Transverse colon (tissue), 4 donors: ENCODE measurements at regions of chr5 and their contacts with region 1.

Region 1: DNA sequence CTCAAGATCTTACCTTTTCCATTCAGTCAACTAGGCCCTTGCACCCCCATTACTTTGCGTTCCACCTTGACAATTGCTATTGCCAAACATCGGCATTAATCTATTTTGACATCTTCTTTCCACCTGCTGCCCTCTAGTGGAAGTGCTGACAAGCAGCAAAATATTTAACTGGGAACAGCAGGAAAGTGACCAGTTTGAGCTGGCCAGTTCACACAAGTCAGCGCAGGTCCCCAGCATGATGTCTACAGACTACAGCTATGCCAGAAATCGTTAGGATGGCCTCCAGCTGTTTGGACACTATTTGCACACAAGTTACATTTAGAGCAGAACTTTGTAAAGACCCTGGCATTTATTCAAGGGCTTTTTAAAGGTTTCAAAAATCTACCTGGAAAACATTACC is 160.1 kb downstream of the GHR start:
- DNase-seq: peak; percentile 47
- H3K4me3 ChIP-seq: no peak overlapping the region
- H3K27ac ChIP-seq: no peak overlapping the region
- H3K4me1 ChIP-seq: peaks cover 0 to 22% (median 2%) of the 10 kb centered on the region in 4 donors
- H3K27me3 ChIP-seq: no peaks in the 10 kb centered on the region
- CTCF ChIP-seq: peak; percentile 80 to 83 (median 81)
- EP300 ChIP-seq: no peak
- POLR2A ChIP-seq: no peak

Region 2: DNA sequence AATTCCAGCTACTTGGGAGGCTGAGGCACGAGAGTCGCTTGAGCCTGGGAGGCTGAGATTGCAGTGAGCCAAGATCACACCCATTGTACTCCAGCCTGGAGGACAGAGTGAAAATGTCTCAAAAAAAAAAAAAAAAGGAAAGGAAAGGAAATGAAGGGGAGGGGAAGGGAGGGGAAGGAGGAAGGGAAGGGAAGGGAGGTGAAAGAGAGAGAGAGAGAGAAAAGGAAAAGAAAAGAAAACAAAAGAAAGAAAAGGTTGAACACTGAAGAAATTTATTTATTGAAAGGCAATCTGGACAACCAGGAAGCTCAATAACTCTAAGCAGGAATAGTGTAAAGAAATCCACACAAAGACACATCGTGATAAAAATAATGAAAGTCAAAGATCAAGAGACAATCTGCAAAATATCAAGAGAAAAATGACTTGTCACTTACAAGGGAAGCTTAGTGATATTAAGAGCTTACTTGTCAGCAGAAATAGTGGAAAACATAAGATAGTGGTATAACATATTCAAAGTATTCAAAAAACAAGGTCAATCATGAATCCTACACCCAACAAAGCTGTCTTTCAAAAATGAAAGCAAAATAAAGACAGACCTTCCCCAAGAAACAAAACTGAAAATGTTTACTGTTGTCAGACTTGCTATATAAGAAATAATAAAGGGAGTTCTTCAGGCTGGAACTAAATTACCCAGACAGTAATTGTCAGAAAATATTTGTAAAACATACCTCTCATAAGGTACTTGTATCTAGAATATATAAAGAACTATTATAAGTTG is 690.1 kb before region 1 on chr5:
- in situ Hi-C with region 1: loop called in 1 of 4 experiments (anchors 25 kb)
- intact Hi-C with region 1: no loop called
- DNase-seq: no peak
- H3K4me3 ChIP-seq: no peak overlapping the region
- H3K27ac ChIP-seq: no peak overlapping the region
- H3K4me1 ChIP-seq: no peaks in the 10 kb centered on the region
- H3K27me3 ChIP-seq: peaks cover 21% of the 10 kb centered on the region
- CTCF ChIP-seq: no peak
- EP300 ChIP-seq: no peak
- POLR2A ChIP-seq: no peak

Region 3: DNA sequence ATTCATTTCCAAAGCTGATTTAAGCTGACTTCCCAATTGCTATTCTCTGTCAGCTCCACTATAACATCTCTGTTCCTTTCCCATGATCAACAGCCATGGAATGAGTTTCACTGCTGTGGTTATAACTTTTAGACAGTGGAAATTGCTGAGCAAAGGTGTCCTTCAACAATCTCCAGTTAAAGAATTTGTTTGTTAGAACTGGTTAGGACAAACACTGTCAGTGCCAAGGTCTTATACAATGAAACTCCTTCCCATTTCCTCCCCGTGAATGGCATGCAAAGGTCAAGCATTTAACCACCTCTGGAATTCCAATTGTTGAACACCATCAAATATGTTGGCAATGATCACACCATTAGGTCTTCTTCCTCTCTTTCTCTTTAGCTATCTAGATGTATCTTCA is 205.8 kb before region 1 on chr5:
- in situ Hi-C with region 1: no loop called
- intact Hi-C with region 1: no loop called
- DNase-seq: no peak
- H3K4me3 ChIP-seq: no peak overlapping the region
- H3K27ac ChIP-seq: peak overlapping the region in 1 of 4 donors; percentile 27
- H3K4me1 ChIP-seq: peaks cover 0 to 5% (median 0%) of the 10 kb centered on the region in 4 donors
- H3K27me3 ChIP-seq: no peaks in the 10 kb centered on the region
- CTCF ChIP-seq: no peak
- EP300 ChIP-seq: no peak
- POLR2A ChIP-seq: no peak

Region 4: GRCh38 chr5:42423285-42424165 is 159.8 kb before region 1 on chr5 and contains the start of gene GHR:
- in situ Hi-C with region 1: no loop called
- intact Hi-C with region 1: loop called (anchors 5 kb)
- DNase-seq: peak; percentile 82
- H3K4me3 ChIP-seq: peak within 1 kb of the TSS; percentile 47 to 67 (median 50)
- H3K27ac ChIP-seq: peak within 1 kb of the TSS; percentile 76 to 91 (median 86)
- H3K4me1 ChIP-seq: peaks cover 0 to 30% (median 5%) of the 10 kb centered on the region in 4 donors
- H3K27me3 ChIP-seq: peaks cover 7% of the 10 kb centered on the region
- CTCF ChIP-seq: peak; percentile 69 to 85 (median 79)
- EP300 ChIP-seq: no peak
- POLR2A ChIP-seq: no peak
- total RNA-seq, gene GHR: 0.40 to 11.6 (median 7.6) TPM